ENCODE measurements at regions of chr2 and their contacts with region 1.

Region 1: GRCh38 chr2:236512902-236513435 is 56.7 kb upstream of the ACKR3 start:
- DNase-seq: peak; percentile 71
- H3K4me3 Mint-ChIP-seq: no peak overlapping the region
- H3K27ac Mint-ChIP-seq: no peak overlapping the region
- H3K4me1 Mint-ChIP-seq: peaks cover 3% of the 10 kb centered on the region
- H3K27me3 Mint-ChIP-seq: peaks cover 25% of the 10 kb centered on the region

Region 2: GRCh38 chr2:236523249-236523648 is 10.3 kb after region 1 on chr2:
- CTCF ChIA-PET with region 1: interaction called, 10 read pairs
- POLR2A ChIA-PET with region 1: no interaction called
- DNase-seq: no peak
- H3K4me3 Mint-ChIP-seq: no peak overlapping the region
- H3K27ac Mint-ChIP-seq: no peak overlapping the region
- H3K4me1 Mint-ChIP-seq: no peaks in the 10 kb centered on the region
- H3K27me3 Mint-ChIP-seq: peaks cover 31% of the 10 kb centered on the region

Region 3: GRCh38 chr2:236569573-236569973 is 56.6 kb after region 1 on chr2 and contains the start of gene ACKR3:
- CTCF ChIA-PET with region 1: interaction called, 37 read pairs
- POLR2A ChIA-PET with region 1: no interaction called
- DNase-seq: peak; percentile 85
- H3K4me3 Mint-ChIP-seq: peak within 1 kb of the TSS; percentile 26
- H3K27ac Mint-ChIP-seq: peak within 1 kb of the TSS; percentile 38
- H3K4me1 Mint-ChIP-seq: peaks cover 35% of the 10 kb centered on the region
- H3K27me3 Mint-ChIP-seq: peaks cover 3% of the 10 kb centered on the region
- total RNA-seq, gene ACKR3: 5.4 to 6.4 TPM